ENCODE measurements at regions of chr4 and their contacts with region 1.

Region 1: GRCh38 chr4:70839589-70840093 is at the start of gene GRSF1:
- DNase-seq: peak; percentile 96 to 98
- ATAC-seq: peak; percentile 96
- H3K4me3 ChIP-seq: peak within 1 kb of the TSS; percentile 56 to 85
- H3K27ac ChIP-seq: peak within 1 kb of the TSS; percentile 0 to 69
- H3K4me1 ChIP-seq: no peaks in the 10 kb centered on the region
- H3K27me3 ChIP-seq: no peaks in the 10 kb centered on the region
- total RNA-seq, gene GRSF1: 39.2 to 40.0 TPM

Region 2: DNA sequence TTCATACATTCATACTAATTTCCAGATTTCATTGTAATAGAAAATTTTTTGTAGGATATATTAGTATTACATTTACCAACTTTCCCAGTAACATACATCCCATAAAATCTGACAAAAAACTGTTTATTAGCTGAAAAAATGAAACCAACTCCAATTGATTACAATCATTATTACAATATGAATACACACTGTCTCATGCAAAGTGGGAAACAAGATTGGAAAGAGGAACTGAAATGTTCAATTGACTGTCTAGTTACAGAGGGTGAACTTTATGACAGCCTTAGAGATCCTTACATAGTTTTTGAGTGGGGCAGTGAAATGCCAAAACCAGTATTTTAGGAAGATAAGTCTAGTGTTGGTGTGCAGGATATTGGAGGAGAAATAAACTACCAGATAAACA is 249.9 kb before region 1 on chr4:
- intact Hi-C with region 1: no loop called
- DNase-seq: no peak
- ATAC-seq: no peak
- H3K4me3 ChIP-seq: no peak overlapping the region
- H3K27ac ChIP-seq: no peak overlapping the region
- H3K4me1 ChIP-seq: no peaks in the 10 kb centered on the region
- H3K27me3 ChIP-seq: no peaks in the 10 kb centered on the region

Region 3: DNA sequence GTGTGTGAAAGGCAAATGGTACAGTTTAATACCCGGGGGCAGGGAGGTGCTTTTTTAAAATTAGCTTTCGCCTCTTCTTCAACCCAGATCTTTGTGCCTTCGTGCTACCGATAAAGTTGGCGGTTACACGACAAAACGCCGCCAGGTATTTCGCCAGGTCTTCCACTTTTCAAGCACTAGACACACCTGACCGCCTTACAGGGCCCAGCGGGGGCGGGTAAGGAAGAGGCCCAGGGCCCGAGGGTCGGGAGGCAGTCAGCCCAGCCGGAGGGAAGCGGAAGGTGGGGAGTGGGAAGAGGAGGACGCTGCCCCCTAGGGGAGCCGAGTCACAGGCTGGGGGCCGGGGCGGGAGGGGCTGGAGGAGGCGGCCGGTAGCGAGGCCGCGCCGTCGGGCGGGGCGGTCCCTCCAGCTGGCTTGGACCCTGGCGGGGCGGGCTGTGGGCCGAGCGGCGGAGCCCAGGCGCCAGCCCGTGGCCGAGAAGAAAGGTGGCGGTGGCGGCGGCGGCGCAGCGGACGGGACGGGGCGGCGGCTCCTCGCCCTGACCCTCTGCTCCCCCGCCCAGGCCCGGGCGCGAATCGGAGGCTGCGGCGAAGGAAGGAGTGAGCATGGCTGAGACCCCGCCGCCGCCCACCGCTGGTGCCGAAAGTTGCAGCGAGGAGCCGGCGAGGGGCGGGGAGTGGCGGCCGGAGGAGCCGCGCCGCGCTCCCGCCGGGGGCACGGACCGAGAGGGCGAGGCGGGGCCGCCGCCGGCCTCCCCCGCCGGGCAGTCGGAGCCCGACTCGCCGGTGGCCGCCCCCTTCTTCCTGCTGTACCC is 135.1 kb before region 1 on chr4:
- intact Hi-C with region 1: loop called in 1 of 2 experiments (anchors 10 kb)
- DNase-seq: peak; percentile 86 to 93
- ATAC-seq: peak; percentile 92
- H3K4me3 ChIP-seq: peak overlapping the region; percentile 91 to 92
- H3K27ac ChIP-seq: peak overlapping the region; percentile 80 to 84
- H3K4me1 ChIP-seq: peaks cover 5 to 7% of the 10 kb centered on the region in 2 donors
- H3K27me3 ChIP-seq: no peaks in the 10 kb centered on the region

Region 4: DNA sequence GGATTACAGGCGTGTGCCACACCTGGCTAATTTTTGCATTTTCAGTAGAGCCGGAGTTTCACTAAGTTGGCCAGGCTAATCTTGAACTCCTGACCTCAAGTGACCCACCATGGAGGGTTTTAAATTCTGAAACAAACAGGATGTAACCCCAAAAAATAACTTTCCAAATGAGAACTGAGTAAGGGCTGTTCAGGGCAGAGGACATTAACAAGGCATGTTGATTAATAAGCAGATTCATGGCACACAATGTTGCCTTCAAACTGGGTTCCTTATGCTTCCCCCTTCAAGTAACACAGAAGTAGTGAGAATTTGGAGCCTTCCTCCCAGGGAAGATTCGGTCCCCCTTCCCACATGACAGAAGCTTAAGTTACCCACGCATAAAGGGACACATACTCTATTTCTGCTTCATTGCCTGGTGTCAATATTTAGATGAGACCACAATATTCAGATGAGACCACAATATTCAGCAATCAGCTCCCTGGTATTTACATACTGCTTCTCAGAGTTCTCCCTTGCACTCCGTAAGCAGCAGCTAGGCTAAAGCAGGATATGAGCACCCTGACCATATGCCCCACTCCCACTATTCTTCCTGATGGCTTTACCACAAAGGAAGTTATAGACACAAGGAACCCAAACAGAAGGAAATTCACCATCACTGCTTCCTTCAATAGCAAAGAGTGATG is 21.3 kb before region 1 on chr4:
- intact Hi-C with region 1: no loop called
- DNase-seq: no peak
- ATAC-seq: no peak
- H3K4me3 ChIP-seq: no peak overlapping the region
- H3K27ac ChIP-seq: no peak overlapping the region
- H3K4me1 ChIP-seq: no peaks in the 10 kb centered on the region
- H3K27me3 ChIP-seq: no peaks in the 10 kb centered on the region

Region 5: DNA sequence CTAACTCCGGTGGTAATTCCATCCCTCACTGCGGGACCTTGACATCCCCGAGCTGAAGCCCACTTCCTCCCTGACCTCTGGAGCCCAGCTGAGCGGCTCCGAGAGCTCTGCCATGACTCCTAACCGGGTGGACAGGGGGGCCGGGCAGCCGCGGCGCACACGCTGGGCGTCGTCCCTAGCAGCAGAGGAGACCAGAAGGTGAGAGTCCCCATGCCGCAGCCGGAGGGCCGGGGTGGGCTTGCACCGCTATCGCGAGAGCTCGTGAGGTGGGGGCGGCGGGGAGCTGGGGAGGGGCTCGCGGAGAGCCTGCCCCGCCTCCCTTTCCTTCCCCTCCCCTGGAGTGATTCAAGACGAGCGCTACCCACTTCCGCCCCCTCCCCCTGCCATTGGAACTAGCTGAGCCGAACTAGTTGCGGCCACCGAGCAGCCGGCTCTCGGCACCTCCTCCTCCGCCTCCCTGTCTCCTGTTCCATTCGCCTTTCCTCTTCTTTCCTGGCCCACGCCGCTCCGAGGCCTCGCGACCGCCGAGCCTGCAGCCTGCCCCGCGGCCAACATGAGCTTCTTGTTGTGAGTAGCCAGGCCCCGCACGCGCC is 62.4 kb after region 1 on chr4 and contains the start of gene MOB1B:
- intact Hi-C with region 1: loop called (anchors 2 to 5 kb)
- DNase-seq: peak; percentile 93 to 96
- ATAC-seq: peak; percentile 96
- H3K4me3 ChIP-seq: peak within 1 kb of the TSS; percentile 77 to 92
- H3K27ac ChIP-seq: peak within 1 kb of the TSS in 1 of 2 donors; percentile 73
- H3K4me1 ChIP-seq: no peaks in the 10 kb centered on the region
- H3K27me3 ChIP-seq: no peaks in the 10 kb centered on the region
- total RNA-seq, gene MOB1B: 26.5 to 29.8 TPM

Region 6: GRCh38 chr4:70993181-70994068 is 153.8 kb after region 1 on chr4 and contains the start of gene DCK:
- intact Hi-C with region 1: loop called (anchors 1 to 10 kb)
- DNase-seq: peak; percentile 94 to 97
- ATAC-seq: peak; percentile 99
- H3K4me3 ChIP-seq: peak within 1 kb of the TSS; percentile 42 to 62
- H3K27ac ChIP-seq: peak within 1 kb of the TSS in 1 of 2 donors; percentile 60
- H3K4me1 ChIP-seq: peaks cover 0 to 3% of the 10 kb centered on the region in 2 donors
- H3K27me3 ChIP-seq: no peaks in the 10 kb centered on the region
- total RNA-seq, gene DCK: 10.7 to 11.2 TPM